K562 (cell line): ENCODE measurements at regions of chr2 and their contacts with region 1.

Region 1: DNA sequence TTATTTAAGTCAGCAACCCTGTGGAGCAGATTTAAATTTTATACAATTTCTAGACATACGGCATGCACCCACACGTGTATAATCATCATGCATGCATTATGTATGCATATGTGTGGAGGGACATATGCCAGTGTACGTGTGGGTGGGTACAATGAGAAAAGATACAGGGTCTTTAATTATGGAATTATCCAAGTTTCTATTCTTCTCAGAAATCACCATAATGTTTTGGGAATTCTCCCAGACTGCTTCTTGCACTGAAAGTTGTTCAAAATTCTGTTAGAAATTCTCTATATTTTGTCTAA is 63.9 kb upstream of the TMEM18 start:
- DNase-seq: no peak
- ATAC-seq: no peak
- H3K4me3 ChIP-seq: no peak overlapping the region
- H3K27ac ChIP-seq: no peak overlapping the region
- H3K4me1 ChIP-seq: peaks cover 0 to 14% of the 10 kb centered on the region in 2 experiments; a peak in 3 of 5 replicates
- H3K27me3 ChIP-seq: peaks cover 4 to 7% of the 10 kb centered on the region in 2 experiments; a peak in 1 of 5 replicates
- CTCF ChIP-seq: no peak
- EP300 ChIP-seq: no peak
- POLR2A ChIP-seq: no peak
- RAD21 ChIP-seq: no peak

Region 2: DNA sequence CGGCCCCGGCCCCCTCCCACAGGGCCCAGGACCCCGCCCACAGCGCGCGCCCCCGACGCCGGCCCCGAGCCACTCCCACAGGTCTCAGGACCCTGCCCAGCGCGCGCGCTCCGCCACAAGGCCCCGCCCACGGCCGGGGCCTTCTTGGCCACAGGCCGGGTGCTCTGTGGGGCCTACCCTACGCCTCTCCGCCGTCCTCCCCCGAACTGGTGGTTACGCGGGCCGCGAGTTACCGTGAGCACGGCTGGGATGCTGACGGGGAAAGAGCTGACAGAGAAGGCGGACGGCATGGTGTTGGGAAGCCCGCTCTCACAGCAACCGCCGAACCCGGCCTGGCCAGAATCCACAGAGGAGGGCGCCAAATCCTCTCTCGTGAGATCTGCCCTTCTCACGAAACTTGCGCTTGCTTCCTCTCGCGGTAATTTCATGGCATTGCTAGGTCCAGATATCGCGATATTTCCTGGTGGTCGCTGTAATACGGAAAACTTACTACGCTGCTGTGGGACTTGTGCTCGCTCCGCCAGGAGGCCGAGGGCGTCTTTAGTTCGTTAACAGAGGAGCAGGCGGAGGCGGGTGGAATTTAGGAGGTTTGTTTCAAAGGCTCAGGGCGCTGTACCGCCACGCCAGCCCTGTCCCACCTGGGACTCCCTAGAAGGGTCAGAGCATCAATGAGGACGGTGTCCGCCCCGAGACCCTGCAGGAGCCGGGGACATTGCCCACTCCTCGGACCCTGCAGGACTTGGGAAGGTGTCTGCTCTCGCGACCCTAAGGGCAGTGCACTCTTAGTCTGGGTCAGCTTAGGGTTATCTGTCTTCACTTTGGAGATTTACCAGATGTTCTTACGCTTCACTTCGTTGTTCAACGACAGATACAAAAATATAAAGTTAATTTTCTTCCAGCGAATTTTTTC is 63.8 kb before region 1 on chr2 and contains the start of gene TMEM18:
- CTCF ChIA-PET with region 1: no interaction called
- POLR2A ChIA-PET with region 1: no interaction called
- in situ Hi-C with region 1: no loop called
- intact Hi-C with region 1: loop called (anchors 5 kb)
- DNase-seq: peak; percentile 73 to 98 (median 81)
- ATAC-seq: peak; percentile 75
- H3K4me3 ChIP-seq: peak within 1 kb of the TSS; percentile 70
- H3K27ac ChIP-seq: peak within 1 kb of the TSS; percentile 100
- H3K4me1 ChIP-seq: peaks cover 6 to 19% of the 10 kb centered on the region in 2 experiments; a peak in 4 of 5 replicates
- H3K27me3 ChIP-seq: no peaks in the 10 kb centered on the region
- CTCF ChIP-seq: peak; percentile 25 to 49 (median 41); a peak in 4 of 6 replicates
- EP300 ChIP-seq: no peak
- POLR2A ChIP-seq: peak; percentile 98
- RAD21 ChIP-seq: peak; percentile 17 to 21; a peak in 3 of 4 replicates
- polyA plus RNA-seq, gene TMEM18: 54.5 to 55.9 TPM

Region 3: DNA sequence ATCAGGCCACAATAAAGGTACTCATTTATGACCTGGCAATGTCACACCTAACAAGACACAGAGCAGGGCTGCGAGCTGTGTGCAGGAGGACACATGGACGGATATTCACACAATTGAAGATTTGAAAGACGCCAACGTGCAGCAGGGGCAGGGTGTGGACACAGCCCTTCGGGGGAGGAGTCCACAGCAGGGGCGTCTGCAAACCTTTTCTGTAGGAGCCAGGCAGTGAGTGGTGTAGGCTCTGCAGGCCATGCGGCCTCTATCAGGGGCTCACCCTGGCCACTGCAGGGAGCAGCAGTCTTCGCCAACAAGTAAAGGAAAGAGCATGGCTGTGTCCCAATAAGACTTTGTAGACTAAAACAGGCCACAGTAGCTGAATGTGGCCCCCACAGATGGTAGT is 83.8 kb after region 1 on chr2:
- CTCF ChIA-PET with region 1: no interaction called
- POLR2A ChIA-PET with region 1: no interaction called
- in situ Hi-C with region 1: no loop called
- intact Hi-C with region 1: no loop called
- DNase-seq: no peak
- ATAC-seq: peak; percentile 86
- H3K4me3 ChIP-seq: no peak overlapping the region
- H3K27ac ChIP-seq: no peak overlapping the region
- H3K4me1 ChIP-seq: 0 out of 5 replicates have a peak, but pooled peaks cover 0 to 3% of the 10 kb centered on the region in 2 experiments
- H3K27me3 ChIP-seq: peaks cover 18 to 46% of the 10 kb centered on the region in 2 experiments
- CTCF ChIP-seq: no peak
- EP300 ChIP-seq: no peak
- POLR2A ChIP-seq: no peak
- RAD21 ChIP-seq: no peak